Head of caudate nucleus (tissue), 42 donors: ENCODE measurements at regions of chr10 and their contacts with region 1.

Region 1: GRCh38 chr10:63465293-63466143 is at the start of gene JMJD1C:
- DNase-seq: peak; percentile 26 to 87 (median 72)

Region 2: DNA sequence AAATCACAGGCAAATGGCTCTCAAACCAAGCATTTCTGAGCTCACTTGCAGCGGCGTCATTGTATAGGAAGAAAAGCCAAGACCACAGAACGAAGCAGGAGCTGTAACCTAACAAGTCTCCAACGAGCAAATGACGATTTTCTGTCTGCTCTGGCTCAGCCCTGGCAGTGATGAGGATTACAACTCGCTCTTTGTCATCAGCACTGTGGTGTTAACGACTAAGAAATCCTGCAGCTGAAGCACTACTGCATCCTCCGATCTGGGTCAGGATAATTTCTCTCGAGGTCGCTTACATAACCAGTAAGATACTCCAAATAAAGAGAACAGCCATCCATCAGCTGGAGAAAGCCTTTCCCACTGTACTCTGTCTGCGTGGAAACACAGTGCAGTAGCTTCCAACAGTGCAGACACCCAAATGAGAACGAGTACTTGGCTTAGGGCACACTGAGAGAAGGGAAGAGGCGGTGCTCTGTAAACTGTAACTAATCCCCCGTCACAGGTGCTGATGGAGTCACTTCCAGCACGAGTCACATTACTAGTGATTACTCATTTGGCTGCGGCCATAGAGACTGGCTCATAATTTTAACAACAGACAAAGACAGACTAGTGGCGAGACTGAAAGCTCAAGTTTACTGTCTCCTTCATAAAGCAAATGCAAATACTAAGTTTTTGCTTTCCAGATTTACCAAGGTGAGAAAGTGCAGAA is 196.6 kb before region 1 on chr10:
- intact Hi-C with region 1: loop called (anchors 5 kb)
- DNase-seq: peak; percentile 12 to 91 (median 71)

Region 3: GRCh38 chr10:63521416-63522276 is 56.1 kb after region 1 on chr10:
- intact Hi-C with region 1: loop called (anchors 5 kb)
- DNase-seq: peak; percentile 58 to 93 (median 82)